Head of caudate nucleus (tissue), 42 donors: ENCODE measurements at regions of chr21 and their contacts with region 1.

Region 1: DNA sequence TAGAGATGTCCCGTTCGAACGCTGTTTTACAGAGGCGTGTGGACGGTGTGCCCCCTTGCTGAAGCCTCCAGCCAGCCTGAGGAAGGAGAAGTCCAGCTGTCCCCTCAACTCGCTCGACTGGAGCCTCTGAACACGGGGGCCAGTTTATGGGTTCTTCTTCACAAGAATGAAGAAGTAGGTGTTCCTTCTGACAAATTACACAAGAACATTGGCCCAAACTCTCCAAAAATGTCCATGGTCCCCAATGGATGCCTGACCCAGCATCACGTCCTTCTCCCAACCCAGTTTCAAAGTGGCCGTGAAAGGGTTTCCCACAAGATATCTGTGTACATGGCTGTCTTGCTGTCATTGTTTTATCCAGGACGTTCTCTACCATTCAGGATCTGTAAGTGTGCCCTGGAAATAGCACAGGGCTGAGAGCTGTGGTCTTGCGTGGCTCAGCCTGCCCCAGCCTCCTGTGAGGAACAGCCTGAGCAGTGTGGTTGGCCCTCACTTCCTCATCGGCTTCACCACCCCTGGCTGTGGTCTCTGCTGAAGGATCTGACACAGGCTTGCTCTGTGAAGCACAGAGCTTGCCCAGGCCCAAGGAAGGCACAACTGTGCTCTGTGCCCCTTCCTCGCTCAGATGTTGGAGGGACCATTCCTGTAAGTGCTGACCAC is 1.0 kb upstream of the S100B start:
- DNase-seq: peak in 25 of 42 donors; percentile 27 to 72 (median 54)

Region 2: DNA sequence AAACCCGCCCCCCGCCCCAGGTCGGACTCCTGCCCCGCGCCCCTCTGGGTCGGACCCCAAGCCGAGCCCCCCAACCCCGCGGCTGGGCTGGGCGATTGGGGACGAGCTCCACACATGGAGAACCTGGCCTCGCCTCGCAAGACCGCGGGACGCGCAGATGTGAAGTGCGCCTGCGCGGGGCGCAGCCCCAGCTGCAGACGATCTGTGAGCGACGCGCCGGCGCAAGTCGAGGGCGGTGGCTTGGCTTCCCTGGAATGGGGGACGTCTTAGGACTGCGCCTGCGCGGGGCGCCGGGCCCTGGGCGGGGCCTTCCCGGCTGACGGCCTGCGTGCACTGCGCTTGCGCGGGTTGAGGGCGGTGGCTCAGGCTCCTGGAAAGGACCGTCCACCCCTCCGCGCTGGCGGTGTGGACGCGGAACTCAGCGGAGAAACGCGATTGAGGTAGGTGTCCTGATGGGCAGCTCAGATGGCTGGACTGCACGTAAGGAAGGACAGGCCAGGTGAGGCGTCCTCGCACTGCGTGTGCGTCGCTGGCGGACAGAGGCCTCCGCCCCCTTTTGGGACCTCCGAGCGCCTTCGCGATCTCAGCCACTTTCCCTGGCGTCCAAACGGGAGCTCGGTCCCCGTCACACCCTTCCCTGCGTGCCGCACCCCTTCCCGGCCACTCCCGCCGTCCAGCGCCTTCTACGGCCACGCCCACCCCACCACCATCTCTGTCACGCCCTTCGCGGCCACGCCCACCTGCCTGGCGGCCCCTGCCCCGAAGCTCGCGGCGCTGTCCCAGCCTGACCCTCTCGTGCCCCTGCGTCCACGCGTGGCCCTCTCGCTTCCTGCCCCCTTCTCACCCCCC is 29.7 kb after region 1 on chr21 and contains the start of gene PRMT2:
- intact Hi-C with region 1: loop called (anchors 1 kb)
- DNase-seq: peak; percentile 87 to 99 (median 96)